ENCODE measurements at regions of chr21 and their contacts with region 1.

Region 1: GRCh38 chr21:39125752-39126485 is 57.3 kb downstream of the PSMG1 start:
- DNase-seq: peak; percentile 53 to 72 (median 62)
- ATAC-seq: peak; percentile 96
- H3K4me3 ChIP-seq: no peak overlapping the region
- H3K4me1 ChIP-seq: no peaks in the 10 kb centered on the region
- CTCF ChIP-seq: peak; percentile 26

Region 2: GRCh38 chr21:38505654-38506515 is 620.0 kb before region 1 on chr21:
- intact Hi-C with region 1: loop called (anchors 10 kb)
- DNase-seq: peak in 1 of 3 donors; percentile 73
- ATAC-seq: peak; percentile 86
- H3K4me3 ChIP-seq: no peak overlapping the region
- H3K4me1 ChIP-seq: peaks cover 4% of the 10 kb centered on the region
- CTCF ChIP-seq: peak; percentile 26

Region 3: DNA sequence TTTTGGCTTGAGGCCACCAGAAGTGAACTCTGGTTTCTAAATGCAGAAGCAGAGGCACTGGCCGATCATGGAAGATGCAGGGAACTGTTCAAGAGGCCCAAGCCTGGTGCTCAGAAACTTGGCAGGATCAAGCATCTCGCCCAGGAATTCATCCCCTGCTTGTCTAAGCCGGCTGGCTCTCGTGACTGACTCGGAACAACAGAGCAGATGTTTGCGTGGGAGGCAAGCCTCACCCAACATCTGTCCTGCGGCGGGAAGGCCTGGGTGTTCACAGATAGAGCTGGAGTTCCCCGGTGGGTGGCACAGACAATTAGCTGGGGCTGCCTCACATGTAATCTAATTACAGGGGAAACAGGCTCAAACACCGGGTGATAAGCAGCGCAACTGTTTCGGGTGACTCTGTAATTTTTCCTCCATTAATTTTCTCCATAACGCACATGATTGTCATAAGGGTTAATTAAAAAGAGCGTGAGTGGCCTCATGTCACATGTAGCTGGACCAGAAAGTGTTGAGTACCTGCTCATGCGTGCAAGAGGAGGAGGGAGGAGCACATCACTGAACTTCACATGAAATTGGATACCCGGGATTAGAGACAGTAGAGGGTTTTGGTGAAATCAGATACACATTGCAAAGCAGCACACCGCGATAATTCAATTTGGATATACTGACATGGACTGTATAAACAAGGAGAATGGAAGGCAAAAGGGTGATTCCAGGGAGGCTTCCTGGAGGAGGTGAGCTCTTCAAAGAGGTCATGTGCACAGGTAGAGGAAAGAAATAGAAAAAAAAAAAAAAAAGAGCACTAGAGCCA is 140.1 kb before region 1 on chr21:
- intact Hi-C with region 1: no loop called
- DNase-seq: peak; percentile 48 to 74 (median 54)
- ATAC-seq: peak; percentile 35
- H3K4me3 ChIP-seq: no peak overlapping the region
- H3K4me1 ChIP-seq: peaks cover 18% of the 10 kb centered on the region
- CTCF ChIP-seq: no peak

Region 4: GRCh38 chr21:39066829-39067780 is 58.8 kb before region 1 on chr21:
- intact Hi-C with region 1: no loop called
- DNase-seq: no peak
- ATAC-seq: no peak
- H3K4me3 ChIP-seq: no peak overlapping the region
- H3K4me1 ChIP-seq: no peaks in the 10 kb centered on the region
- CTCF ChIP-seq: no peak

Region 5: DNA sequence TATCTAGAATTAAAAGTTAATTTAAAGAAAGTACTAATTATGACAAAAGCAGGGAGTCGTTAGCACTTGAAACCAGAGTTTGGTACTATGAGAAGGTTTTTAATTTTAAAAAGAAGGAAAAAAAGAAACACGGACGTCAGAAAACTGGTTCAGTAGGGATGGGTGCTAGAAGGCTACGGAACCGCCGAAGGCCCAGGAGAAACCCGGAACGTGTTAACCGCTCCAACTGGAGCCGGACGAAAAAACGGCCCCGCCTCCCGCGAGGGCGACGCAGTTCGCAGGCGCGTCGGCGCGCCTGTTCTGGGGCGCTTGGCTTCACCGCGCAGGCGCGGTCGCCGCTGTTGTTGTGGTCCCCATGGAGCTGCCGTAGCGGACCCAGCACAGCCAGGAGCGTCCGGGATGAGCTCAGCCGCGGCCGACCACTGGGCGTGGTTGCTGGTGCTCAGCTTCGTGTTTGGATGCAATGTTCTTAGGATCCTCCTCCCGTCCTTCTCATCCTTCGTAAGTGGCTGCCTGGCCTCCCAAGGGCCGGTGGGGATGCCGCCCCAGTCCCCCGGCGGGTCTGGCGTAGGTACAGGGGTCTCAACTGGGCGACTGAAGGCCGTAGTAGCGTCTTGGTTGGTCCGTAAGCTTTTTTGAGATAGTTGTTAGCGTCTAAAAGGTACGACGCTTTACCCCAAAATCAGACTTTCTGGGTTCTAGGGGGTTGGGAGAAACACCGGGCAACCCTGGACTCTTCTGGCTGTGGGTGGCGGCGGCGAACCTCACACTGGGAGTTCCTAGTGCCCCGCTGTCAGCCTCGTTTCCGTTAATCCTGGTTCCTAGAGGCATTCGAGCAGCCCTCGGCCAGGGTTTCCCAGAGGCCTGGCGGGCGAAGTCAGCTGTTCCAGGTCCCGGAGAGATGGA is 254.3 kb after region 1 on chr21:
- intact Hi-C with region 1: no loop called
- DNase-seq: peak; percentile 92 to 96 (median 95)
- ATAC-seq: peak; percentile 99
- H3K4me3 ChIP-seq: peak overlapping the region; percentile 50
- H3K4me1 ChIP-seq: peaks cover 12% of the 10 kb centered on the region
- CTCF ChIP-seq: no peak

Region 6: GRCh38 chr21:39976800-39977199 is 850.9 kb after region 1 on chr21:
- intact Hi-C with region 1: no loop called
- DNase-seq: no peak
- ATAC-seq: no peak
- H3K4me3 ChIP-seq: no peak overlapping the region
- H3K4me1 ChIP-seq: no peaks in the 10 kb centered on the region
- CTCF ChIP-seq: no peak